GM12878 (cell line): ENCODE measurements at regions of chr5 and their contacts with region 1.

Region 1: GRCh38 chr5:177113566-177114424 is 19.8 kb upstream of the NSD1 start:
- DNase-seq: peak; percentile 55
- ATAC-seq: peak; percentile 81
- H3K4me3 ChIP-seq: no peak overlapping the region
- H3K27ac ChIP-seq: no peak overlapping the region
- H3K4me1 ChIP-seq: peaks cover 3% of the 10 kb centered on the region; the same call in 1 of the 2 replicates
- H3K27me3 ChIP-seq: no peaks in the 10 kb centered on the region
- CTCF ChIP-seq: peak; percentile 99 to 100 (median 99); a peak in 5 of 6 replicates
- EP300 ChIP-seq: no peak
- POLR2A ChIP-seq: no peak
- RAD21 ChIP-seq: peak; percentile 100

Region 2: GRCh38 chr5:176660860-176661641 is 452.7 kb before region 1 on chr5:
- CTCF ChIA-PET with region 1: interaction called, 102 read pairs
- POLR2A ChIA-PET with region 1: no interaction called
- RAD21 ChIA-PET with region 1: interaction called, 43 read pairs
- SMC1A ChIA-PET with region 1: interaction called, 35 read pairs
- in situ Hi-C with region 1: no loop called
- intact Hi-C with region 1: loop called (anchors 2 kb)
- DNase-seq: peak; percentile 16
- ATAC-seq: peak; percentile 89
- H3K4me3 ChIP-seq: no peak overlapping the region
- H3K27ac ChIP-seq: no peak overlapping the region
- H3K4me1 ChIP-seq: peaks cover 16% of the 10 kb centered on the region
- H3K27me3 ChIP-seq: no peaks in the 10 kb centered on the region
- CTCF ChIP-seq: peak; percentile 95 to 98 (median 96); a peak in 5 of 6 replicates
- EP300 ChIP-seq: no peak
- POLR2A ChIP-seq: no peak
- RAD21 ChIP-seq: peak; percentile 88

Region 3: DNA sequence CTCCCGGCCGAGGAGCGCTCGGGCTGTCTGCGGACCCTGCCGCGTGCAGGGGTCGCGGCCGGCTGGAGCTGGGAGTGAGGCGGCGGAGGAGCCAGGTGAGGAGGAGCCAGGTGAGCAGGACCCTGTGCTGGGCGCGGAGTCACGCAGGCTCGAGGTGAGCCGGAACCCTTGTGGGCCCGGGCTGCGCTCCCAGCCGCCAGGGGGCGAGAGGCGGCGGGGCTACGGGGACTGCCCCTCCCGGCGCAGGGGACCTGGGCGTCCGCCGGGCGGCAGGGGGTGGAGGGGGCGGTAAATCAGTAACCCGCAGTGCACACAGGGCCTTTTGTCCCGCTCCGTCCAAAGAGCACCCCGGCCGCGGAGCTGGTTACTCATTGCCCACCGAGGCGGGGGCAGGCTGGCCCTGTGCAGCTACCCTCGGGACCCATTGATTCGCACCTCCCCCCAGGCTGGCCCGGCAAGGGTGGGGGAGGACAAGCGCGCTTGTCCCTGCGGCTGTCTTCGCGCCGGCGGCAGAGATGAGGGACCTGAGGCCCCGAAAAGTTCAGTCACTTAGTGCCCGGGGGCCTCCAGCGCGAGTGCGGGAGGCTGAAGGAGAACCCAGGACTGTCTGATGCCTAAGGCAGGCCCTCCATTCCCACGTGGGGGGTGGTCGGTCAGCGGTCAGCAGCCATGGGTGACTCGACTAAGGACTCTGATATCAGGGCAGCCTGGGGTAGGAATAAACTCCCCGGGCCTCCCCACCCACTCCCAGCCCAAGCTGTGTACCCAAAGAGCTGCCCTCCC is 26.7 kb before region 1 on chr5:
- CTCF ChIA-PET with region 1: interaction called, 46 read pairs
- POLR2A ChIA-PET with region 1: no interaction called
- RAD21 ChIA-PET with region 1: interaction called, 4 read pairs
- SMC1A ChIA-PET with region 1: interaction called, 3 read pairs
- in situ Hi-C with region 1: no loop called
- intact Hi-C with region 1: no loop called
- DNase-seq: peak; percentile 19
- ATAC-seq: peak; percentile 84
- H3K4me3 ChIP-seq: 0 out of 2 replicates have a peak overlapping the region, but pooled peaks have one; percentile 11
- H3K27ac ChIP-seq: no peak overlapping the region
- H3K4me1 ChIP-seq: 0 out of 2 replicates have a peak, but pooled peaks cover 2% of the 10 kb centered on the region
- H3K27me3 ChIP-seq: peaks cover 0 to 4% of the 10 kb centered on the region in 2 experiments; a peak in 3 of 4 replicates
- CTCF ChIP-seq: peak; percentile 36 to 67 (median 55); a peak in 5 of 6 replicates
- EP300 ChIP-seq: no peak
- POLR2A ChIP-seq: no peak
- RAD21 ChIP-seq: no peak

Region 4: DNA sequence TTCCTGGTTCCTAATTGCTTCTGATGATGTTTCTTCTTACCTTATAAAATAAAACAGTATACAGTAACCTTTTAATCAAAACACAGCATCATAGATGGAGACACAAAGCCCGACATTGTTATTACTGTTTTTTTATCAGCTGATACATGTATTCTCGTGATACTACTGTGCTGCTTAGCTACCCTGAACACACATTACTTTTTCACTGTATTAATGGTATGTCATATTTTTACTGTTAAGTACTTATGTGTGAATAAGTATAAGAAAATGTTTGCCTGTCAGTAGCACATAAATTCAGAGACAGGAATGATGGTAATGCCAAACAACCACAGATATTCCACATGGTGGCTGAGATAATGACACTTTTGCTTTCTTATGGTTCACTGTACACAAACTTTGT is 121.0 kb after region 1 on chr5:
- CTCF ChIA-PET with region 1: interaction called, 5 read pairs
- POLR2A ChIA-PET with region 1: no interaction called
- RAD21 ChIA-PET with region 1: interaction called, 6 read pairs
- SMC1A ChIA-PET with region 1: interaction called, 6 read pairs
- in situ Hi-C with region 1: no loop called
- intact Hi-C with region 1: loop called (anchors 5 kb)
- DNase-seq: no peak
- ATAC-seq: no peak
- H3K4me3 ChIP-seq: no peak overlapping the region
- H3K27ac ChIP-seq: no peak overlapping the region
- H3K4me1 ChIP-seq: no peaks in the 10 kb centered on the region
- H3K27me3 ChIP-seq: no peaks in the 10 kb centered on the region
- CTCF ChIP-seq: no peak
- EP300 ChIP-seq: no peak
- POLR2A ChIP-seq: no peak
- RAD21 ChIP-seq: no peak

Region 5: GRCh38 chr5:177276886-177277285 is 163.1 kb after region 1 on chr5:
- CTCF ChIA-PET with region 1: interaction called, 14 read pairs
- POLR2A ChIA-PET with region 1: no interaction called
- RAD21 ChIA-PET with region 1: interaction called, 3 read pairs
- SMC1A ChIA-PET with region 1: interaction called, 4 read pairs
- in situ Hi-C with region 1: no loop called
- intact Hi-C with region 1: no loop called
- DNase-seq: no peak
- ATAC-seq: no peak
- H3K4me3 ChIP-seq: no peak overlapping the region
- H3K27ac ChIP-seq: no peak overlapping the region
- H3K4me1 ChIP-seq: no peaks in the 10 kb centered on the region
- H3K27me3 ChIP-seq: no peaks in the 10 kb centered on the region
- CTCF ChIP-seq: no peak
- EP300 ChIP-seq: no peak
- POLR2A ChIP-seq: no peak
- RAD21 ChIP-seq: no peak

Region 6: DNA sequence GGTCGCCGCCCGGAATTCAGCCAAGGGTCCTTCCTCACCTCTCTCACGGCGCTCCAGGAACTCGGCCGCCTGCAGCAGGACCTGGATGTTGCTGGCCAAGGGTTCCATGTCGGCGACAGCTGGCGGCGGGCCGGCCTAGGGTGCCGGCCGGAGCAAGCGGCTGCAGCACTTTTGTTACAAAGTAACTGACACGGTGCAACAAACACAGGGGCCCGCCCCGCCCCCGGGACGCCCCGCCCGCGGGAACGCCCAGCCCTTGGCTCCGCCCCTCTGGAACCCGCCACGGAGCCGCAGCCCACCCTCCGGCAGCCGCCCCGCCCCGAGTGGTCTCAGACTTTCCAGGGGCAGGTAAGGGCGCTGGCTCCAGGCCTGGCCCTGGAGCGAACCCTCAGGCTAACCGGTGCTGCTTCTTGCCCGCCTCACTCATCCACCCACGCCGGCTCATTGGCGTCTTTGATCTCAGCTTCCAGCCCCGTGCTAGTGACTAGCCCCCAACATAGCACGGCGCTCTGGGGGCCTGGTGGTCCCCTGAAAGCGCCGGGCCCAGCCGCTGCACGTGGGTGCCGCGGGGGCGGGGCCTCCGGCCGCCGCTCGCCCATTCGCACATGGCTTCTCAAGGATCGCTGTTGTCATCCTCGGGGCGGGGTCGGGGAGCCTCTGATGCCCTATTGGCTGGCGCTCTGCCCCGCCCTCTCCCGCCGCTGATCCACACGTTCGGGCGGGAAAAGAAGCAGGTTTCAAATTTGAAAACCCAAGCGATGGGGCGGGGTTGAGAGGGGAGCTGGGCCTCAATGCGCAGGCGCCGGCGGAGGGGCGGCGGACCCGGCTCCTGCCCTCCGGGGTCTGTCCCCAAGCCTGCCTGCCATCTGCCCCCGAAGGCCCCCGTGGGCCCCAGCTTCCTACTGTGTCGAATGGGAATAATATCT is 198.2 kb after region 1 on chr5 and contains the start of gene MXD3:
- CTCF ChIA-PET with region 1: interaction called, 56 read pairs
- POLR2A ChIA-PET with region 1: no interaction called
- RAD21 ChIA-PET with region 1: interaction called, 9 read pairs
- SMC1A ChIA-PET with region 1: interaction called, 19 read pairs
- in situ Hi-C with region 1: no loop called
- intact Hi-C with region 1: no loop called
- DNase-seq: peak; percentile 76
- ATAC-seq: peak; percentile 89
- H3K4me3 ChIP-seq: peak within 1 kb of the TSS; percentile 93
- H3K27ac ChIP-seq: peak within 1 kb of the TSS; percentile 92
- H3K4me1 ChIP-seq: peaks cover 17% of the 10 kb centered on the region
- H3K27me3 ChIP-seq: no peaks in the 10 kb centered on the region
- CTCF ChIP-seq: no peak
- EP300 ChIP-seq: no peak
- POLR2A ChIP-seq: peak; percentile 78
- RAD21 ChIP-seq: no peak
- polyA plus RNA-seq, gene MXD3: 0.24 to 0.93 TPM

Region 7: GRCh38 chr5:177454397-177455035 is 340.7 kb after region 1 on chr5:
- CTCF ChIA-PET with region 1: interaction called, 4 read pairs
- POLR2A ChIA-PET with region 1: no interaction called
- RAD21 ChIA-PET with region 1: no interaction called
- SMC1A ChIA-PET with region 1: interaction called, 6 read pairs
- in situ Hi-C with region 1: no loop called
- intact Hi-C with region 1: loop called (anchors 2 kb)
- DNase-seq: no peak
- ATAC-seq: peak; percentile 68
- H3K4me3 ChIP-seq: peak overlapping the region; percentile 82
- H3K27ac ChIP-seq: peak overlapping the region; percentile 67
- H3K4me1 ChIP-seq: peaks cover 11% of the 10 kb centered on the region
- H3K27me3 ChIP-seq: no peaks in the 10 kb centered on the region
- CTCF ChIP-seq: peak; percentile 79 to 98 (median 87); a peak in 4 of 6 replicates
- EP300 ChIP-seq: peak; percentile 39 to 70; a peak in 3 of 4 replicates
- POLR2A ChIP-seq: no peak
- RAD21 ChIP-seq: peak; percentile 84